Testis (tissue), 5 donors: ENCODE measurements at regions of chr22 and their contacts with region 1.

Region 1: GRCh38 chr22:23970816-23971486 is 3.3 kb downstream of the DDT start:
- DNase-seq: no peak
- H3K4me3 ChIP-seq: no peak overlapping the region
- H3K27ac ChIP-seq: no peak overlapping the region
- H3K4me1 ChIP-seq: no peaks in the 10 kb centered on the region
- H3K27me3 ChIP-seq: no peaks in the 10 kb centered on the region
- CTCF ChIP-seq: no peak
- POLR2A ChIP-seq: no peak

Region 2: GRCh38 chr22:23925020-23925606 is 45.8 kb before region 1 on chr22:
- intact Hi-C with region 1: loop called (anchors 5 kb)
- DNase-seq: no peak
- H3K4me3 ChIP-seq: no peak overlapping the region
- H3K27ac ChIP-seq: no peak overlapping the region
- H3K4me1 ChIP-seq: no peaks in the 10 kb centered on the region
- H3K27me3 ChIP-seq: no peaks in the 10 kb centered on the region
- CTCF ChIP-seq: no peak
- POLR2A ChIP-seq: no peak